Left lung (tissue), 14 donors: ENCODE measurements at regions of chr19 and their contacts with region 1.

Region 1: GRCh38 chr19:18203863-18204393 is at the start of gene RAB3A:
- DNase-seq: peak; percentile 100
- ATAC-seq: peak; percentile 94
- H3K4me3 ChIP-seq: peak within 1 kb of the TSS; percentile 56 to 66
- H3K27ac ChIP-seq: peak within 1 kb of the TSS; percentile 90 to 98
- H3K4me1 ChIP-seq: peaks cover 9 to 34% of the 10 kb centered on the region in 2 donors
- H3K27me3 ChIP-seq: peaks cover 0 to 20% of the 10 kb centered on the region in 2 donors
- CTCF ChIP-seq: no peak
- polyA plus RNA-seq, gene RAB3A: 3.5 to 6.2 (median 4.4) TPM

Region 2: GRCh38 chr19:18251587-18252369 is 47.9 kb after region 1 on chr19:
- intact Hi-C with region 1: loop called in 1 of 2 experiments (anchors 10 kb)
- DNase-seq: peak; percentile 67 to 85 (median 74)
- ATAC-seq: peak; percentile 66
- H3K4me3 ChIP-seq: no peak overlapping the region
- H3K27ac ChIP-seq: no peak overlapping the region
- H3K4me1 ChIP-seq: no peaks in the 10 kb centered on the region
- H3K27me3 ChIP-seq: peaks cover 0 to 26% of the 10 kb centered on the region in 2 donors
- CTCF ChIP-seq: peak; percentile 89 to 90